ENCODE measurements at regions of chr3 and their contacts with region 1.

Region 1: DNA sequence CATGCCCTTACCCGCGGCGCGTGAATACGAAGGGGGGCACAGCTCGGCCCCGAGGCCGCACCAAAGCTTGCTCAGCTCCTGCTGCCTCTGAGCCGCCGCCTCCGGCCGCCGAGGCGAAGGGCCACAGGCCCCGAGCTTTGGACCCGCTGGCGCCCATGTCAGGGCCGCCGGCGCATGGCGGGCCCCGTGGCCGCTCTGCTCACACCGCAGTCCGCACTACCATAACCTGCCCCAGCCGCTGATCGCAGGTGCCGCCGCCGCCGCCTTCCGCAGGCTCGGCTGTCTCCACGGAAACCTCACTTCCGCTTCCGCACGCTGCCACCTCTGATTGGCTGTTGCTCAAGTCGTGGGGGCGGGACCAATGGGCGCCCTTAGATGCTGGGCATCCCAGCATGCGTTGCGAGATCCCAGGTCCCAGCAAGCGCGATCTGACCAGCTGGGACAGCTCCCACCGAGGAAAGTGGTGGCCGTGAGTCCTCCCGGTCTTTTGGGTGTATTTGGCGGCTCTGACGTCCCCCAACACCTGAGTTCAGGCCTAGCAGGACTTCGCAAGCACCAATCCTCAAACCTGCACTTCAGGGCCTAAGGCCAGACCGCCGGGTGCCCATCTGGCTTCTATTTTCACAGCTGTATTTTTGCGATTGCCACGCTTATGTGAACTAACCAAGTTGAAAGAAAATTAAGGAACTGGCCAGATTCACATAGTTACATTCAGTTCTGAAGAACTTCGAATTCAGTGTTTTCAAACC is at the start of gene TUSC2:
- DNase-seq: peak; percentile 99
- H3K4me3 ChIP-seq: peak within 1 kb of the TSS; percentile 45 to 97 (median 74)
- H3K27ac ChIP-seq: peak within 1 kb of the TSS; percentile 51 to 77 (median 56)
- H3K4me1 ChIP-seq: peaks cover 14 to 33% of the 10 kb centered on the region in 2 donors
- H3K27me3 ChIP-seq: no peaks in the 10 kb centered on the region
- CTCF ChIP-seq: peak in 1 of 6 experiments; percentile 7
- POLR2A ChIP-seq: peak in 1 of 2 donors; percentile 82
- total RNA-seq, gene TUSC2: 28.7 to 63.7 (median 42.3) TPM

Region 2: GRCh38 chr3:50292159-50293078 is 35.7 kb before region 1 on chr3 and contains the start of gene IFRD2:
- intact Hi-C with region 1: loop called (anchors 5 kb)
- DNase-seq: peak; percentile 98
- H3K4me3 ChIP-seq: peak within 1 kb of the TSS; percentile 45 to 92 (median 78)
- H3K27ac ChIP-seq: peak within 1 kb of the TSS; percentile 20 to 75 (median 68)
- H3K4me1 ChIP-seq: peaks cover 15 to 18% of the 10 kb centered on the region in 2 donors
- H3K27me3 ChIP-seq: no peaks in the 10 kb centered on the region
- CTCF ChIP-seq: no peak
- POLR2A ChIP-seq: peak in 1 of 2 donors; percentile 62
- total RNA-seq, gene IFRD2: 63.9 to 96.5 (median 88.4) TPM

Measured in thyroid gland (tissue), 4 donors.